ENCODE measurements at regions of chr9 and their contacts with region 1.

Region 1: GRCh38 chr9:127955294-127956035 is 17.8 kb upstream of the DPM2 start:
- DNase-seq: peak; percentile 45

Region 2: GRCh38 chr9:128034821-128035764 is 79.6 kb after region 1 on chr9:
- CTCF ChIA-PET with region 1: interaction called, 12 read pairs
- POLR2A ChIA-PET with region 1: no interaction called
- DNase-seq: peak; percentile 83

Measured in HEK293T (cell line).